Activated CD4-positive, alpha-beta T cell treated with anti-CD3 and anti-CD28 coated beads for 36 hours (primary cell): ENCODE measurements at regions of chr15 and their contacts with region 1.

Region 1: GRCh38 chr15:97909291-97909891 is 51.1 kb upstream of the ARRDC4 start:
- DNase-seq: peak; percentile 77
- ATAC-seq: peak; percentile 81
- H3K4me3 Mint-ChIP-seq: no peak overlapping the region
- H3K27ac Mint-ChIP-seq: no peak overlapping the region
- H3K4me1 Mint-ChIP-seq: peaks cover under 1% of the 10 kb centered on the region
- H3K27me3 Mint-ChIP-seq: peaks cover 5% of the 10 kb centered on the region

Region 2: GRCh38 chr15:97652700-97653167 is 256.7 kb before region 1 on chr15:
- CTCF ChIA-PET with region 1: no interaction called
- POLR2A ChIA-PET with region 1: no interaction called
- intact Hi-C with region 1: no loop called
- DNase-seq: no peak
- ATAC-seq: no peak
- H3K4me3 Mint-ChIP-seq: no peak overlapping the region
- H3K27ac Mint-ChIP-seq: no peak overlapping the region
- H3K4me1 Mint-ChIP-seq: no peaks in the 10 kb centered on the region
- H3K27me3 Mint-ChIP-seq: peaks cover 12% of the 10 kb centered on the region

Region 3: DNA sequence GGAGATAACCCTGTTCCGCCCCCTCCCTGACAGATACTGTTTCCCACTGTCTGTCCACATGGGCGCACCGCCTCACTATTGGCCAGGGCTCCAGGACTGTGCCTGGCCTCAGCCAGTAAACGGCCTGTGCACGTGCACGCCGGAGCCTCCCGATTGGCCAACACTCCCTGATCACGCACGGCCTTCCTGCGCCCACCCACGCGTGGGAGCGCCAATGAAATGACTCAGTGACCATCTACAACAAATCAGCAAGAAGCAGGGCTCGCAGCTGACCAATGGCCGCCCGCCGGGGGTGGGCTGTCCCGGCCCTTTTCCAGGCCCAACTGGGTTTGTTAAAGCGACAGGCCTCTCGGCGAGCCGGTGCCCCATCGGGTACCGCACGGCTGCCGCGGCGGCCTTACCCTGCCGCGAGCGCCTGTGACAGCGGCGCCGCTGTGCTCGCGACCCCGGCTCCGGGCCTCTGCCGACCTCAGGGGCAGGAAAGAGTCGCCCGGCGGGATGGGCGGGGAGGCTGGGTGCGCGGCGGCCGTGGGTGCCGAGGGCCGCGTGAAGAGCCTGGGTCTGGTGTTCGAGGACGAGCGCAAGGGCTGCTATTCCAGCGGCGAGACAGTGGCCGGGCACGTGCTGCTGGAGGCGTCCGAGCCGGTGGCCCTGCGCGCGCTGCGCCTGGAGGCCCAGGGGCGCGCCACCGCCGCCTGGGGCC is 51.1 kb after region 1 on chr15 and contains the start of gene ARRDC4:
- CTCF ChIA-PET with region 1: no interaction called
- POLR2A ChIA-PET with region 1: no interaction called
- intact Hi-C with region 1: loop called in 1 of 2 experiments (anchors 1 kb)
- DNase-seq: peak; percentile 98
- ATAC-seq: peak; percentile 99
- H3K4me3 Mint-ChIP-seq: peak within 1 kb of the TSS; percentile 70
- H3K27ac Mint-ChIP-seq: peak within 1 kb of the TSS; percentile 70
- H3K4me1 Mint-ChIP-seq: peaks cover 20% of the 10 kb centered on the region
- H3K27me3 Mint-ChIP-seq: no peaks in the 10 kb centered on the region
- total RNA-seq, gene ARRDC4: 0.88 to 1.1 TPM

Region 4: DNA sequence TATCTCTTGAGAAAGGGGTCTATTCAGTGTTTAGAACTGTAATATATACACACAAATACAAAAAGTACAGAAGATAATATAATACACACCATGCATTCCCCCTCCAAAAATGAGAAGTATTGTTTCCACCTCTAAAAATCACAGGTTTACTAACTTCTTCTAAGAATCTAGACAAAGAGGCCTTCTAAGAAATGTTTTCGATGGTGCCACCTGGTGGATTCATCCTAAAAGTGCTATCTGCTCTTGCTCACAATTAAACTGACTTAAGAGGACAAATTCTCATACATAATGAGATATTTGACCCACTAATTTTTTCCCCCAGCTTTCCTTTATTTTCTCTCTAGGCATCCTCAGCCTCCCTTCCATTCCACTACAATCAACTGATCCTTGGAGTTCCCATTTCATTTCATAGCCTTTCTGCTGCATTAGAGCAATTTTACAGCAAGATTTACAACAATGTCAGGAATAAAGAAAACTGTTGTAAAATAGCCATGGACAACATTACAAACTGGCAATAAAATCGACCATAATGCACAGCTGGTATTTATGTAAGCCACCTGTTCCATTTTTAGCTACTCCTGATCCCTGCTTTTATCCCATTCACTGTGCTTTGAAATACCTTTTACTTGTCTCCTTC is 175.7 kb after region 1 on chr15:
- CTCF ChIA-PET with region 1: interaction called, 6 read pairs
- POLR2A ChIA-PET with region 1: no interaction called
- intact Hi-C with region 1: loop called (anchors 1 kb)
- DNase-seq: peak; percentile 50
- ATAC-seq: no peak
- H3K4me3 Mint-ChIP-seq: no peak overlapping the region
- H3K27ac Mint-ChIP-seq: no peak overlapping the region
- H3K4me1 Mint-ChIP-seq: no peaks in the 10 kb centered on the region
- H3K27me3 Mint-ChIP-seq: no peaks in the 10 kb centered on the region

Region 5: DNA sequence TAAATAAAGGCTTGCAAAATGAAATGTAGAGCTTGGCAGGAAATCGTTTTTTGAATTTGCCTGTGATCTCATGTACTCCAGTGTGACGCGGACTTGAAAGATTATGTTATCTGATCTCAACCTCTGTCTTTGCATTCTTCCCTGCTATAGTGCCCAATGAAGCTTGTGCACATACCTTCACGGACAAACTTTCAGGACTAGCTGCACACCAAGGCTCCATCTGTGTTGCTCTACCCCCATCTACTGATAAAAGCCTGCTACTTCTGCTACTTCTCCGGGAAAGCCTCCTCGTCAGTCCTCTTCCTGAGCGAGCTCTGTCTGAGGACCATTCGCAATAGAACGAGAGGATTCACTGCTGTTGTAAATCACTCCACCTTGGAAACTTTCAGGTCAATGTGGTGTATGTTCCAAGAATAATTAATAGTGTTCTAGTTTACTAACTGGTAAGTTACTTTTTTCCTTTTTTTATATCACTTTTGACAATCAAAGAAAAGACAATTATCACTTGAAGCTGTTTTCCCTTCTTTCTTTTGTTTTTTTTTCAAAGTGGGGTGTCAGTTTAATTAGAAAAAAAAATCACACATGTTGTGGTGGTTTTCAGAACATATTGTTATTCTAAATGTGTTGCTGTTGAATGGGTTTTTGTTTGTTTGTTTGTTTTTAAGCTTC is 268.7 kb after region 1 on chr15:
- CTCF ChIA-PET with region 1: interaction called, 21 read pairs
- POLR2A ChIA-PET with region 1: no interaction called
- intact Hi-C with region 1: loop called (anchors 1 kb)
- DNase-seq: peak; percentile 51
- ATAC-seq: peak; percentile 74
- H3K4me3 Mint-ChIP-seq: no peak overlapping the region
- H3K27ac Mint-ChIP-seq: no peak overlapping the region
- H3K4me1 Mint-ChIP-seq: peaks cover 7% of the 10 kb centered on the region
- H3K27me3 Mint-ChIP-seq: peaks cover 12% of the 10 kb centered on the region

Region 6: GRCh38 chr15:98428253-98428989 is 519.0 kb after region 1 on chr15:
- CTCF ChIA-PET with region 1: no interaction called
- POLR2A ChIA-PET with region 1: no interaction called
- intact Hi-C with region 1: loop called (anchors 5 to 10 kb)
- DNase-seq: peak; percentile 79
- ATAC-seq: peak; percentile 80
- H3K4me3 Mint-ChIP-seq: peak overlapping the region; percentile 54
- H3K27ac Mint-ChIP-seq: no peak overlapping the region
- H3K4me1 Mint-ChIP-seq: peaks cover 4% of the 10 kb centered on the region
- H3K27me3 Mint-ChIP-seq: peaks cover 42% of the 10 kb centered on the region